ENCODE measurements at regions of chr11 and their contacts with region 1.

Region 1: GRCh38 chr11:12693479-12694181 is 19.4 kb downstream of the TEAD1 start:
- DNase-seq: peak; percentile 32 to 66
- ATAC-seq: peak; percentile 78 to 87 (median 84)
- H3K4me3 ChIP-seq: peak overlapping the region; percentile 55
- H3K27ac ChIP-seq: peak overlapping the region; percentile 95
- H3K4me1 ChIP-seq: peaks cover 85% of the 10 kb centered on the region
- H3K27me3 ChIP-seq: no peaks in the 10 kb centered on the region
- CTCF ChIP-seq: no peak

Region 2: GRCh38 chr11:12755510-12756453 is 62.2 kb after region 1 on chr11:
- intact Hi-C with region 1: no loop called
- DNase-seq: no peak
- ATAC-seq: no peak
- H3K4me3 ChIP-seq: no peak overlapping the region
- H3K27ac ChIP-seq: peak overlapping the region; percentile 65
- H3K4me1 ChIP-seq: peaks cover 80% of the 10 kb centered on the region
- H3K27me3 ChIP-seq: no peaks in the 10 kb centered on the region
- CTCF ChIP-seq: no peak

Region 3: GRCh38 chr11:12769834-12770345 is 76.3 kb after region 1 on chr11:
- intact Hi-C with region 1: loop called in 1 of 2 experiments (anchors 5 kb)
- DNase-seq: no peak
- ATAC-seq: no peak
- H3K4me3 ChIP-seq: no peak overlapping the region
- H3K27ac ChIP-seq: peak overlapping the region; percentile 83
- H3K4me1 ChIP-seq: peaks cover 82% of the 10 kb centered on the region
- H3K27me3 ChIP-seq: no peaks in the 10 kb centered on the region
- CTCF ChIP-seq: no peak

Region 4: DNA sequence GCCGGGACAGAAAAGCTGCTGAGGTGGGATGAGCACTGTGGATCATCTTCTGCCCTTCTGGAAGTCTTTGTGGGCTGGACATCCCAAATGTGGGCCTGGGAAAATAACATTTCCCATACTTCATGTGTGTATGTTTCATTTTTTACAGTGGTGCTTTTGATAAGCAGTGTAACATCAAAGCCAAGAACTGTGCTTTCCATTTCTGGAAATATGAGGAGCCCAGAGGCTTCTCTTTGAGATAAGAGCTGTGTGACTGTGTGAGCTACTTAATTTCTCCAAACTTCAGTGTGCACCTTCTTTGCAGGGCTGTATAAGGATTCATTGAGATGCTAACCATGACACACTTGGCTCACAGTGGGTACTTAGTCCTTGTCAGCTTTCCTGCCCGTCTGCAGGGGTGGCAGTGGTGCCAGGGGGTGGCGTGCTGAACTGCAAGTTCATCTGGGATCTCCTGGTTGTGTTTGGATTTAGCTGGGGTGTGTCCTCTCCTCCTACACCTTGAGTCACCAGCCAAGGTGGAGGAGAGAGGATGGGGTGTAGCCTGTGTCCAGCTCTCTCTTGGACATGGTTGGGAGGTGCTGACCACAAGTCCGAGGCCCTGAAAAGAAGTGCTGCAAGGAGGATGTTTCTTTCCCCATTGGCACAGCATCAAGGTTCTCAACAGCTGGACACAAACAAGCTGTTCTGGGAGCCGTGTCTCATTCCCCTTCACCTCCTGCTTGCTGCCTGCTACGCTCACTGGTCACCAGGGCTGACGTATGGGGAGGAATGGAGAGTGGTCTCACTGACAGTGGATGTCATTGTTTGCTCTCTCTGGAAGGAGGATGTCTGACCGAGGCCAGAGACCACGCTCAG is 120.0 kb after region 1 on chr11:
- intact Hi-C with region 1: loop called in 1 of 2 experiments (anchors 5 kb)
- DNase-seq: peak in 1 of 2 donors; percentile 63
- ATAC-seq: peak in 3 of 4 donors; percentile 52 to 60 (median 56)
- H3K4me3 ChIP-seq: no peak overlapping the region
- H3K27ac ChIP-seq: peak overlapping the region; percentile 87
- H3K4me1 ChIP-seq: peaks cover 75% of the 10 kb centered on the region
- H3K27me3 ChIP-seq: no peaks in the 10 kb centered on the region
- CTCF ChIP-seq: no peak

Measured in psoas muscle (tissue), 8 donors.